A549 (cell line): ENCODE measurements at regions of chr17 and their contacts with region 1.

Region 1: DNA sequence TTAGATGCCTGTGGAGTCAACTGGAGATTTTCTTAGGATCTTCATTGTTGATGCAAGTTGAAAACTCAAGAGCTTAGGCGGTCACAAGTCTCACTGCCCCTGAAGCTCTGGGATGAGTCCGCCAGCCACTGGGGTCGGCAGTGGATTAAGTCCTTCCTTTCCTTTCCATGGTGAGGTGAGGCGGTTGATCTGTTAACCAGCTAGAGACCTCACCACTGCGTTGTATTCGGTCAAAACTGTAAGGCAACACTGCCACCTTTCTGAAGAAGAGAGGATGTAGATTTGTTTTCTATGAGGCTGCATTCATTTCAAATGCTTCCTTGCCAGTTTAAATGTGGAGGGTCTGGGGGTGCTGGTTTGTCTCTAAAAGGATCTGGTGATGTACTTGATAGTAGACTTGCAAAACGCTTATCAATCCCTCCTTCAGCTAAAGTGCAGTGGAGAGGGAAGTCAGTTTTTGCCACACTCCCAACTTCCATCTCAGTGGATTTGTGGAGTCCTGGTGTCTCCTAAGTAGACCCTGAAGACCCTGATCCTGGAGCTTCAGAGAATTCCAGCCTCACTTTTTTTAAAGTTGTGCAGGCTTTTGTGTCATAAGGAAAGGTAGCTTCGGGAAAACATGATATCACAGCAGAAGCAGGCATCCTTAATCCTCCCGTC is 1.7 kb downstream of the MYOCD start:
- DNase-seq: peak; percentile 70 to 90
- ATAC-seq: peak; percentile 75 to 80
- H3K4me3 ChIP-seq: peak overlapping the region; percentile 60
- H3K27ac ChIP-seq: peak overlapping the region; percentile 80 to 81
- H3K4me1 ChIP-seq: peaks cover 29% of the 10 kb centered on the region; the same call in 2 of the 3 replicates
- CTCF ChIP-seq: peak; percentile 92
- EP300 ChIP-seq: no peak
- POLR2A ChIP-seq: no peak
- RAD21 ChIP-seq: peak; percentile 98

Region 2: GRCh38 chr17:12256380-12256995 is 410.9 kb before region 1 on chr17:
- CTCF ChIA-PET with region 1: interaction called, 219 read pairs
- POLR2A ChIA-PET with region 1: no interaction called
- DNase-seq: peak; percentile 55 to 75
- ATAC-seq: peak; percentile 73 to 91; a peak in 4 of 6 replicates
- H3K4me3 ChIP-seq: no peak overlapping the region
- H3K27ac ChIP-seq: peak overlapping the region; percentile 41 to 54; a peak in 5 of 6 replicates
- H3K4me1 ChIP-seq: peaks cover 9% of the 10 kb centered on the region; the same call in 2 of the 3 replicates
- CTCF ChIP-seq: peak; percentile 98
- EP300 ChIP-seq: no peak
- POLR2A ChIP-seq: no peak
- RAD21 ChIP-seq: peak; percentile 94 to 98

Region 3: DNA sequence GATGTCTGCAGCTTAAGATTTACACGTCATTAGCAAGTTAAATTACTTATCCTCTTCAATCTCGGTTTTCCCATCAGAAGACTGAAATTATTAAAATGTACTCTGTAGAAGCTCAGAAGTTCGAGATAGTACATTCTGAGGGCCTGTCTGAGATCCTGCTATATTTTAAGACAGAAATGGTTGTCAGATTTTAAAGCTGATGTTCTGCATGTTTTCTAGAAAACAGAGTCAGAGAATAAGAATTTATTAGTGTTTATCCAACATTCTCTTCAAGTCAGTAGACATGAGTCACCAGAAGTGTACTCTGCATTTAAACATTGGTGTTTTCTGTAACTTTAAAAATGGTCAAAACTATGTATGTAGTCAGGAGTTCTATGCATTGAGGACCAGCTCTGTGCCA is 156.9 kb before region 1 on chr17:
- CTCF ChIA-PET with region 1: interaction called, 17 read pairs
- POLR2A ChIA-PET with region 1: no interaction called
- DNase-seq: peak in 1 of 2 experiments; percentile 22
- ATAC-seq: peak; percentile 39 to 78; a peak in 3 of 6 replicates
- H3K4me3 ChIP-seq: no peak overlapping the region
- H3K27ac ChIP-seq: peak overlapping the region; percentile 50 to 68
- H3K4me1 ChIP-seq: peaks cover 32% of the 10 kb centered on the region
- CTCF ChIP-seq: no peak
- EP300 ChIP-seq: no peak
- POLR2A ChIP-seq: no peak
- RAD21 ChIP-seq: no peak

Region 4: DNA sequence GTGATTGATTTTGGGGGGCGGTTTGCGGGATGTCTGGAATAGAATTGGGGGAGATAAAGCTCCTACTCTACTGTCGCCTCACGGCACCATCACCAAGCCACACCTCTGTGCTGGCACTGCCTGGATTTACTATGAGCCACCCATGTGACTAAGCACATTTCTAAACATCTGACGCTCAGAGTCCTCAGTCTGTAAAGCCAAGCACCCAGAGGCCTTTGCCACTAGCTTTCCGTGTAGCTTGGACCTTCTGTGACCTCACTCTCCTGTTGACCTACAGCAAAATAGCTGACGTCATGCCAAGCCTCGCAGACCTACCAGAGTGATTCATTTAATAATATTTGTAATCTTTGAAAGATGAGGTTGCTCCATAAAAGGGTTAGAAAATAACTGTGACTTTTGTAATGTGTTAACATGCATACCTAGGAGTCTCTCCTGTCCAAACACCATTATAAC is 40.2 kb before region 1 on chr17:
- CTCF ChIA-PET with region 1: interaction called, 16 read pairs
- POLR2A ChIA-PET with region 1: interaction called, 12 read pairs
- DNase-seq: peak; percentile 85 to 100
- ATAC-seq: peak; percentile 97 to 98
- H3K4me3 ChIP-seq: no peak overlapping the region
- H3K27ac ChIP-seq: peak overlapping the region; percentile 82 to 88
- H3K4me1 ChIP-seq: peaks cover 41% of the 10 kb centered on the region
- CTCF ChIP-seq: no peak
- EP300 ChIP-seq: peak; percentile 97
- POLR2A ChIP-seq: no peak
- RAD21 ChIP-seq: peak; percentile 41 to 73

Region 5: DNA sequence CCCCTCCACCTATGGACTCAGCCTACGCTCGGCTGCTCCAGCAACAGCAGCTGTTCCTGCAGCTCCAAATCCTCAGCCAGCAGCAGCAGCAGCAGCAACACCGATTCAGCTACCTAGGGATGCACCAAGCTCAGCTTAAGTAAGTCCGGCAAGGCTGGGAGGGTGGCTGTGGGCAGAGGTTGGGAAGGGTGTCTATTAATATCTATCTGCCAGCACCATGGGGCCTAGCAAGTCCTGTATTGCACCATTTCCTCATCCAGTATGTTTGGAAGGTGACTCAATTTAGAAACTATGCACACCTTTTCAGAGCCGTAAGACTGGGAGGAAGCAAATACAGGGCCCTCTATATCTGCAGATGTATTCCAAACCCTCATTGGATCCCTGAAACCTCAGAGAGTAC is 76.9 kb after region 1 on chr17:
- CTCF ChIA-PET with region 1: interaction called, 21 read pairs
- POLR2A ChIA-PET with region 1: no interaction called
- DNase-seq: no peak
- ATAC-seq: no peak; a peak in 1 of 6 replicates
- H3K4me3 ChIP-seq: no peak overlapping the region
- H3K27ac ChIP-seq: no peak overlapping the region
- H3K4me1 ChIP-seq: peaks cover 11% of the 10 kb centered on the region
- CTCF ChIP-seq: no peak
- EP300 ChIP-seq: no peak
- POLR2A ChIP-seq: no peak
- RAD21 ChIP-seq: no peak